ENCODE measurements at regions of chr19 and their contacts with region 1.

Region 1: GRCh38 chr19:39390755-39391592 is at the starts of genes MED29 and PAF1:
- DNase-seq: peak; percentile 100
- ATAC-seq: peak; percentile 96
- H3K4me3 ChIP-seq: peak within 1 kb of the TSS; percentile 39 to 51
- H3K27ac ChIP-seq: peak within 1 kb of the TSS; percentile 86
- H3K4me1 ChIP-seq: peaks cover 24% of the 10 kb centered on the region
- H3K27me3 ChIP-seq: no peaks in the 10 kb centered on the region
- CTCF ChIP-seq: no peak
- total RNA-seq, gene MED29: 739 TPM
- total RNA-seq, gene PAF1: 901 TPM

Region 2: DNA sequence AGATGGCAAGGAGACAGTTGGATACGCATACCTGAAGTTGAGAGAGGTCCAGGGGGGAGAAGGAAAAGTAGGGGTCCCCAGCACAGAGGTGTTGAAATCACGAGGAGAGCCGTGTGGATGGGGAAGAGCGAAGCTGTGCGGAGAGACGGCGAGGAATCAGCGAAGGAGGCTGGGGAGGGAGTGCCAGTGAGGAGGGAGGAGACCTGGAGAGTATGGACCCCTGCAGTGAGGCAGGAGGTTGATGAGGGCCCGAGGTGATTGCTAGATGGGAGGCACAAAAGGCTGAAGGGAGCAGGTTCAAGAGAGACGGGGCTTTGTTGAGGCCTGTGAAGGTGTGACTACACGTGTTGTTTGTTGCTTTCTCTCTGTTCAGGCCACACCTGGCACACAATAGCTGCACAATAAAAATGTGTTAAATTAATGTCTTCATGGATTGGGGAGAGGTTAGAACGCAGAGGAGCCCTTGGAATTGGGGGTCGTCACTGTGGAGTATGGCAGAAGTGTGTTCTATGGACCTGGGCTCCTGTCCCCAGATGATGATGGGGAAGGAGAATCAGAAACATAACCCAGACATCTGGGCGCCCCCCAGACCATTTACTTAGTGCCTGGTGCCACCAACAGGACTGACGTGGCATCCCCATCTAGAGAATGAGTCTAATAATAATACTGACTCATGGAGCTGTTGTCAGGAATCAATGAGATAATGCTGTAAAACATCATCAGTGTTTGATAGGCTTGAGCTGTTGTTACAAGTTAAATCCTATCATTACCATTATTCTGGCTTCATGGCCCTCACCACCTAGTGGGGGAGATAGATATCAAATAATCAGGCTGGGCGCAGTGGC is 1346.5 kb before region 1 on chr19:
- CTCF ChIA-PET with region 1: no interaction called
- POLR2A ChIA-PET with region 1: no interaction called
- in situ Hi-C with region 1: no loop called
- intact Hi-C with region 1: no loop called
- DNase-seq: no peak
- ATAC-seq: peak; percentile 18; the same call in 1 of the 2 replicates
- H3K4me3 ChIP-seq: no peak overlapping the region
- H3K27ac ChIP-seq: no peak overlapping the region
- H3K4me1 ChIP-seq: no peaks in the 10 kb centered on the region
- H3K27me3 ChIP-seq: no peaks in the 10 kb centered on the region
- CTCF ChIP-seq: no peak

Region 3: GRCh38 chr19:39335168-39335548 is 55.8 kb before region 1 on chr19:
- CTCF ChIA-PET with region 1: interaction called, 5 read pairs
- POLR2A ChIA-PET with region 1: interaction called, 12 read pairs
- in situ Hi-C with region 1: no loop called
- intact Hi-C with region 1: no loop called
- DNase-seq: no peak
- ATAC-seq: peak; percentile 6
- H3K4me3 ChIP-seq: no peak overlapping the region
- H3K27ac ChIP-seq: no peak overlapping the region
- H3K4me1 ChIP-seq: peaks cover 4% of the 10 kb centered on the region; the same call in 1 of the 2 replicates
- H3K27me3 ChIP-seq: no peaks in the 10 kb centered on the region
- CTCF ChIP-seq: no peak

Region 4: GRCh38 chr19:39372047-39372802 is 18.7 kb before region 1 on chr19:
- CTCF ChIA-PET with region 1: interaction called, 10 read pairs
- POLR2A ChIA-PET with region 1: interaction called, 21 read pairs
- in situ Hi-C with region 1: no loop called
- intact Hi-C with region 1: no loop called
- DNase-seq: no peak
- ATAC-seq: peak; percentile 2
- H3K4me3 ChIP-seq: no peak overlapping the region
- H3K27ac ChIP-seq: no peak overlapping the region
- H3K4me1 ChIP-seq: no peaks in the 10 kb centered on the region
- H3K27me3 ChIP-seq: no peaks in the 10 kb centered on the region
- CTCF ChIP-seq: no peak

Region 5: GRCh38 chr19:39428283-39429112 is 37.5 kb after region 1 on chr19:
- CTCF ChIA-PET with region 1: interaction called, 7 read pairs
- POLR2A ChIA-PET with region 1: interaction called, 524 read pairs
- in situ Hi-C with region 1: loop called (anchors 5 kb)
- intact Hi-C with region 1: no loop called
- DNase-seq: peak; percentile 92
- ATAC-seq: peak; percentile 70
- H3K4me3 ChIP-seq: peak overlapping the region; percentile 0 to 17; a peak in 3 of 4 replicates
- H3K27ac ChIP-seq: peak overlapping the region; percentile 86
- H3K4me1 ChIP-seq: peaks cover 75% of the 10 kb centered on the region
- H3K27me3 ChIP-seq: no peaks in the 10 kb centered on the region
- CTCF ChIP-seq: no peak

Region 6: GRCh38 chr19:39524495-39524894 is 133.5 kb after region 1 on chr19:
- CTCF ChIA-PET with region 1: no interaction called
- POLR2A ChIA-PET with region 1: interaction called, 12 read pairs
- in situ Hi-C with region 1: no loop called
- intact Hi-C with region 1: no loop called
- DNase-seq: no peak
- ATAC-seq: peak; percentile 1; the same call in 1 of the 2 replicates
- H3K4me3 ChIP-seq: no peak overlapping the region
- H3K27ac ChIP-seq: no peak overlapping the region
- H3K4me1 ChIP-seq: peaks cover 3% of the 10 kb centered on the region; the same call in 1 of the 2 replicates
- H3K27me3 ChIP-seq: no peaks in the 10 kb centered on the region
- CTCF ChIP-seq: no peak

Region 7: DNA sequence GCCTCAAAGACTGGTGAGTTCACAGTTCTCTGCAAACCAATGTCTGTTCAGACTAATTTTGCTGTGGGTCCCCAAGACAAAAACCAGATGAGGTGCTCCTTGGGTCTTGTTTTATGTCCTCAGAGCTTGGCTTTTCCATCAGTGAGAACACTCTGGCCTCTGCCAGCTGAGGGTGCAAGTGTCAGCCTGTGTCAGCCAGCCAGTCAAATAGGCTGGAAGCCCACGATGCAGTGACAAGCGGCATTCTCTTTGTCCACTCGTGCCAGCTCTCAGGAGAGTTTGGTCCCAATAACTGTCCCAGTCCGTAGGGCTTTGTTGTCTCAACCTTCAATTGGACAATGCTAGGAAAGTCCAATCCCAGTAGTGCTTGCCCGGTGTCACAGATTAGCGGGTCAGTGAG is 903.6 kb after region 1 on chr19:
- CTCF ChIA-PET with region 1: no interaction called
- POLR2A ChIA-PET with region 1: no interaction called
- in situ Hi-C with region 1: loop called (anchors 5 kb)
- intact Hi-C with region 1: no loop called
- DNase-seq: no peak
- ATAC-seq: peak; percentile 4
- H3K4me3 ChIP-seq: no peak overlapping the region
- H3K27ac ChIP-seq: no peak overlapping the region
- H3K4me1 ChIP-seq: no peaks in the 10 kb centered on the region
- H3K27me3 ChIP-seq: peaks cover 4% of the 10 kb centered on the region; the same call in 1 of the 2 replicates
- CTCF ChIP-seq: no peak